ENCODE measurements at regions of chr5 and their contacts with region 1.

Region 1: GRCh38 chr5:112146323-112147226 is 272.5 kb downstream of the EPB41L4A start:
- DNase-seq: peak in 1 of 2 donors; percentile 59
- ATAC-seq: peak; percentile 93
- H3K4me3 ChIP-seq: no peak overlapping the region
- H3K27ac ChIP-seq: no peak overlapping the region
- H3K4me1 ChIP-seq: peaks cover 0 to 1% of the 10 kb centered on the region in 2 donors
- H3K27me3 ChIP-seq: no peaks in the 10 kb centered on the region

Region 2: DNA sequence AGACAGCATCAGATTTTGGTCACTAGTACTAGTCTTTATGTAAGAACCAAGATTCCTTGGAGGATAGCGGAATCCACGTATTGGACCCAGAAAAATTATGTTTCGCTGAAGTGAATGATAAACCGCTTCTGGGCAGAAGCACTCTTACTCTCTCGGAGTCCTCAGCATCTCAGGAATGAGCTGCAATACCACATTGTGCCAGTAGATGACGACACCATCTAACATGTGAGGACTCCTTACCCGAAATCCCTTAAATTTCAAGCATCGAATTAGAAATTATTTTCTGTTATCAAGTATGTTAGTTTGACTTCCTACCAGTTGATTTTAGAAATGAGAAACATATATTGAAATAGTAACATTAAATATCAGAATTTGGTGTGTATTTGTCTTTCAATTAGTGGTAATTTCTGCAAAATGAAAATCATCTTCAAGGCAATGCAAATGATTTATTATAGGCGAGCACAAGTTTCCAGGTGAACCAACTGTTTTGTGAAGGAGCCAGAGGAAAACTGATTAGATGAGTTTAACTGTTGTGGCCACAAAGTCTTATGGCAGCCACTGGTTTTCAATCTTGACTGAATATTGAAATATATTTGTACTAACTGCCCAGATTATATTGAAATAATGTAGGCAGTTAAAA is 988.4 kb before region 1 on chr5:
- intact Hi-C with region 1: loop called (anchors 5 to 10 kb)
- DNase-seq: peak in 1 of 2 donors; percentile 63
- ATAC-seq: peak; percentile 81
- H3K4me3 ChIP-seq: no peak overlapping the region
- H3K27ac ChIP-seq: no peak overlapping the region
- H3K4me1 ChIP-seq: no peaks in the 10 kb centered on the region
- H3K27me3 ChIP-seq: no peaks in the 10 kb centered on the region

Region 3: DNA sequence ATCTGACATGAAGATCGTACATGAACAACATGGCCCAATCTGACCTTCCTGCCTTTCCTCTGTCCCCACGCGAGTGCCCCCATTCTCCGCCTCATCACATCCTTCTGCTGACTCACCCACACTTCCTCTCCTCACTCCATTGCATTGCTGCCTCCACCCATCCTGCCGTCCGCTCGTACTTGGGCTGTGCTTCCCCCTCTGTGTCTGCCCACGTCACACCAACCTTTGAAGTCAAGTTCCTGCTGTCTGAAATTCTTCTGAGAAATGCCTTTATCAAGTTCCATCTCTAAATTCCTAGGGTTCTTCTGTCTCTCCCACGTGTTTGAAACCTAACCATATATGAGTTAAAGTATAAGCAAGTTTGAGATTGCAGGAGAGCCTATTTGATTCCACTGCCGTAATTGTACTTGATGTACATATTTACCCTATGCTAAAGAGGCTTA is 616.3 kb before region 1 on chr5:
- intact Hi-C with region 1: loop called in 1 of 2 experiments (anchors 5 kb)
- DNase-seq: peak; percentile 81 to 88
- ATAC-seq: peak; percentile 82
- H3K4me3 ChIP-seq: no peak overlapping the region
- H3K27ac ChIP-seq: no peak overlapping the region
- H3K4me1 ChIP-seq: no peaks in the 10 kb centered on the region
- H3K27me3 ChIP-seq: no peaks in the 10 kb centered on the region

Region 4: DNA sequence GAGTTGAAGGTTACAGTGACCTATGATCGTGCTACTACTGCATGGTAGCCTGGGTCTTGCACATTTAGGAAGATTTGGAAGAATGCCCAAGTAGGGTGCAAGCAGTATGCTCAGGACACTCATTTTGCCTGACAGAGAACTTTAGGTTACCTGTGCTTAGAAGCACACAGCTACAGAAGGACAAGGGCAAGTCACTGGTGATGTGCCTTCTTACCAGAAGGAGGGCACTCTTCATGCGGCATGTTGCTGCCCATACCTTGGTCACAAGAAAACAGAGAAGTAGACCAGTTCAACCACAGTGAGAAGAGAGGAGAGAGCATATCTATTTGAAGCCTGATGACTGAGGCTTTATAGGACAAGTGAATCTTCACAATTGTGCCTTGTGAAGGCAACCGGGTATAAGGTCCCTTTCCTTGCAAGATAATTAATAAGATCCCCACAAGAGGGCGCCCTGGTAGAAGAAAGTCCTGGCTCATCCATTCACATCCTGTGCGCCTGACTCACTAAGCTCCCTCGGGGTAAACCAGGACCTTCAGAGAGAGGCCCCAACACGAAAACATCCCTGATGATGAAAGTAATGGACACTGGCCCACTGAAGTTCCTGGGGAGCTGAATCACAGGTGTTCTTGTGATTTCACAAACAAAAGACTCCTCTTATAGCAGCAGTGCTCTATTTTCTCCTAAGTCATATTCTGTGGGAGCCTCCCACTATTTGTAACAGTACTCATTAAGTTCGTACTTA is 596.1 kb before region 1 on chr5:
- intact Hi-C with region 1: loop called (anchors 1 kb)
- DNase-seq: peak; percentile 77 to 84
- ATAC-seq: peak; percentile 93
- H3K4me3 ChIP-seq: no peak overlapping the region
- H3K27ac ChIP-seq: no peak overlapping the region
- H3K4me1 ChIP-seq: no peaks in the 10 kb centered on the region
- H3K27me3 ChIP-seq: no peaks in the 10 kb centered on the region

Region 5: GRCh38 chr5:111735583-111736270 is 410.8 kb before region 1 on chr5:
- intact Hi-C with region 1: loop called in 1 of 2 experiments (anchors 5 kb)
- DNase-seq: no peak
- ATAC-seq: no peak
- H3K4me3 ChIP-seq: no peak overlapping the region
- H3K27ac ChIP-seq: no peak overlapping the region
- H3K4me1 ChIP-seq: peaks cover 0 to 6% of the 10 kb centered on the region in 2 donors
- H3K27me3 ChIP-seq: no peaks in the 10 kb centered on the region

Region 6: GRCh38 chr5:111757355-111758283 is 389.0 kb before region 1 on chr5:
- intact Hi-C with region 1: loop called in 1 of 2 experiments (anchors 5 kb)
- DNase-seq: peak; percentile 97
- ATAC-seq: peak; percentile 92
- H3K4me3 ChIP-seq: peak overlapping the region; percentile 62 to 82
- H3K27ac ChIP-seq: peak overlapping the region; percentile 74 to 78
- H3K4me1 ChIP-seq: no peaks in the 10 kb centered on the region
- H3K27me3 ChIP-seq: no peaks in the 10 kb centered on the region

Region 7: DNA sequence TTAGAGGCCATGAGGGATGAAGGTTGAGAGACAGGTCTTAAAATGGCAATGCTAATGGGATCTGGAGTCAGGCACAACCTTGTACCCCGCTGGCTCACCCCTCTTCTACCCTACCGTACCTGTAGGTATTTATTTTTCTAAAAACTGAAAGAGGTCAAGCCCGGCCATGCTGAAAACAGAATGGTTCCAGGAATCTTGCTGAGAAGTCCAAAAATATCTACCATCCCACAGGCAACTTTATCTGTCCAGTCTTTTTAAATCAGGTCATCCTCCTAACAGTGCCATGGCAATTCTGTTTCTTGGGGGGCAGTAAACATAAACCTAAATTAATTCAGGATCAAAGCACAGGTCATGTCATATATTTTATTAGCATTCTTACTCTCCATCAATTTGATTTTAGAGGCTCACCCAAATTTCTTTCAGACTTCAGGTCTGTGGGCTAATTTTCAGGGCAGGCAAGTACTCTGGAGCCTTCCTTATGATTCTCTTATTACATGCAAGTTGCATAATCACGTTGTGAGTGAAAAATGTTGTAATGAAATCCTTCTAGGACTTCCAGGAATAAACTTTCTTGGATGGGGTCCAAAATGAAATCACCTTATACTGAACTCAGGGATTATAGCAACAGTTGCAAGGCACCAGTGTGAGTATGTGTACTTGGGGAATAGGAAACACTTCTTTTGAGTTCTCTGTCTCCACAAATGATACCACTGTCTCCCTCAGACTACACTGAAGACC is 286.9 kb before region 1 on chr5:
- intact Hi-C with region 1: loop called in 1 of 2 experiments (anchors 10 kb)
- DNase-seq: no peak
- ATAC-seq: peak; percentile 82
- H3K4me3 ChIP-seq: no peak overlapping the region
- H3K27ac ChIP-seq: no peak overlapping the region
- H3K4me1 ChIP-seq: peaks cover 0 to 6% of the 10 kb centered on the region in 2 donors
- H3K27me3 ChIP-seq: no peaks in the 10 kb centered on the region

Measured in aorta (tissue), 5 donors.